Ascending aorta (tissue), 2 donors: ENCODE measurements at regions of chr5 and their contacts with region 1.

Region 1: GRCh38 chr5:151699071-151699901 is 12.6 kb upstream of the SPARC start:
- DNase-seq: peak; percentile 37 to 91
- H3K4me3 ChIP-seq: peak overlapping the region in 1 of 2 donors; percentile 25
- H3K27ac ChIP-seq: peak overlapping the region; percentile 91 to 98
- H3K4me1 ChIP-seq: peaks cover 0 to 44% of the 10 kb centered on the region in 2 donors
- H3K27me3 ChIP-seq: no peaks in the 10 kb centered on the region
- CTCF ChIP-seq: no peak

Region 2: DNA sequence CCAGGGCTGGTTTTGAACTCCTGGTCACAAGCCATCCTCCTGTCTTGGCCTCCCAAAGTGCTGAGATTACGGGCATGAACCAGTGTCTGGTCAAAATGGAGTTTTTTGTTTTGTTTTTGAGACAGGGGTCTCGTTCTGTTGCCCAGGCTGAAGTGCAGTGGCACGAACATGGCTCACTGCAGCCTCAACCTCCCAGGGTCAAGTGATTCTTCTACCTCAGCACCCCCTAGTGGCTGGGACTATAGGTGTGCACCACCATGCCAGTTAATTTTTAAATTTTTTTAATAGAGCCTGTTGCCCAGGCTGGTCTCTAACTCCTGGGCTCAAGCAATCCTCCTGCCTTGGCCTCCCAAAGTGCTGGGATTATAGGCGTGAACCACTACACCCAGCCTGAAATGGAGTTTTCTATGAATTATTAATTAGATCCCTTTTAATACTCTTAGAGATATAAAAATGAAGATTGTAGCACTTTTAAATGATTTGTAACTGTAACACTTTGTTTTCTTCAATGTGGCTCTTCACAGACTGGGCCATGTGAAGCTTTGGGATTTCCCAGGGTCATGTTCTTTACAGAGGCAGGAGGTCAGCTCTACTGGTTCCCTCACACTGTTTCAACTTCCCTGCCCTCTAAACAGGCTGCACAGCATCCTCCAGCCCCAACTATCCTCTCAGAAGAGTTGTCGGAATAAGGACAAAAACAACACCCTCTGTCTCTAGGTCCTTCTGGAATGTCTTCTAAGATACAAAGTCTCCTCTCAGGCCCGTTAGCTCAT is 20.1 kb after region 1 on chr5:
- intact Hi-C with region 1: loop called (anchors 2 kb)
- DNase-seq: peak in 1 of 2 donors; percentile 71
- H3K4me3 ChIP-seq: no peak overlapping the region
- H3K27ac ChIP-seq: peak overlapping the region; percentile 71 to 86
- H3K4me1 ChIP-seq: peaks cover 9 to 26% of the 10 kb centered on the region in 2 donors
- H3K27me3 ChIP-seq: no peaks in the 10 kb centered on the region
- CTCF ChIP-seq: peak; percentile 48 to 57 (median 57)